PC-9 (cell line): ENCODE measurements at regions of chr7 and their contacts with region 1.

Region 1: DNA sequence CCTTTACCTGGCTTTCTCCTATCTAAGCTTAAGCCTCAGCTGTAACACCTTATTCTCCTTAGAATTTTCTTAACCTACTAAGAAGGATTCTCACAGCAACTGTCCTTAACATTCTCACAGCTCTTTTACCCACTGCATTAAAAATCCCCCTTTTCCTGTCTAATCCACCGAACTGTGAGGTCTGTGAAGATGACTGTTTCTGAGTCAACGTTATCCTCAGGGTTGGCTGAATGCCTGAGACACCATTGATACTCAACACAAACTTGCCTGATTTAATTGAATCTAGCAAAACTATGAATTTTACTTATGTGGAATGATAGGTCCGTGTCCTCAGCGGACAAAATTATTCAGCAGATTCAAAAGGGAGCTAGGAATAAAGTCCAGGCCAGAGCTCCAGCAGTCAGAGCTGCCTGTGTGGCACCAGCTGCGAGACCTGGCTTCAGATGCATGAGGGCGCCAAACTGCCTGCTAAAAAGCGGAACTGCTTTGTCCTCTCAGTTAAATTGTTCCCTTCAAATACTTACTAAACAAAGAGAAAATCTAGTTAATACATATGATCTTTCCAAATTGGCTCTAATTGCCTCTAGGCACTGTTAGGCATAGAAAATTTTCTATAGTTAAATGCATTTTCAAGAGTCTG is 33.4 kb upstream of the VWDE start:
- DNase-seq: no peak
- H3K4me3 ChIP-seq: no peak overlapping the region
- H3K27ac ChIP-seq: no peak overlapping the region
- H3K4me1 ChIP-seq: no peaks in the 10 kb centered on the region
- H3K27me3 ChIP-seq: no peaks in the 10 kb centered on the region
- CTCF ChIP-seq: no peak

Region 2: GRCh38 chr7:12211054-12211710 is 225.8 kb before region 1 on chr7 and contains the start of gene TMEM106B:
- CTCF ChIA-PET with region 1: no interaction called
- POLR2A ChIA-PET with region 1: no interaction called
- intact Hi-C with region 1: no loop called
- DNase-seq: peak; percentile 93 to 98
- H3K4me3 ChIP-seq: peak within 1 kb of the TSS; percentile 74
- H3K27ac ChIP-seq: peak within 1 kb of the TSS; percentile 92
- H3K4me1 ChIP-seq: peaks cover 24% of the 10 kb centered on the region
- H3K27me3 ChIP-seq: no peaks in the 10 kb centered on the region
- CTCF ChIP-seq: peak; percentile 44; the same call in 1 of the 2 replicates
- total RNA-seq, gene TMEM106B: 61.1 and 64.4 TPM in 2 replicates

Region 3: DNA sequence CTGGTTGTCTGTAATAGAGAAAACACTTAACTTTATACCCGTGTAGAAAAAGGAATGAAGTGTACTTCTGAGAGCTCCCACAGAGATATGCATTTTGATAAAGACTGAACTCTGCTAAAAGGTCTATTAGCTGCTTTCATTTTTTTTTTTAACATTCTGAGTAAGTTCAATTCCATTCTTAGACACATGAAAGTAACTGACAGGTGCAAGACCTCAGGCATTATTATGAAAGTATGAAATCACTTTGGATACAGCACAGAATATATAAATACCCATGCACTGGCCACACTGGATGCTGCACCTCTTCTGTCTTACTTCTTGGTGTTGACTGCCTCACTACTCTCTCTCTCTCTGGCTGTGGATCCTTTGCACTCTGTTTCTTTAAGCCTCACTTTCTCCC is 79.5 kb before region 1 on chr7:
- CTCF ChIA-PET with region 1: no interaction called
- POLR2A ChIA-PET with region 1: no interaction called
- intact Hi-C with region 1: no loop called
- DNase-seq: no peak
- H3K4me3 ChIP-seq: no peak overlapping the region
- H3K27ac ChIP-seq: no peak overlapping the region
- H3K4me1 ChIP-seq: no peaks in the 10 kb centered on the region
- H3K27me3 ChIP-seq: no peaks in the 10 kb centered on the region
- CTCF ChIP-seq: no peak

Region 4: DNA sequence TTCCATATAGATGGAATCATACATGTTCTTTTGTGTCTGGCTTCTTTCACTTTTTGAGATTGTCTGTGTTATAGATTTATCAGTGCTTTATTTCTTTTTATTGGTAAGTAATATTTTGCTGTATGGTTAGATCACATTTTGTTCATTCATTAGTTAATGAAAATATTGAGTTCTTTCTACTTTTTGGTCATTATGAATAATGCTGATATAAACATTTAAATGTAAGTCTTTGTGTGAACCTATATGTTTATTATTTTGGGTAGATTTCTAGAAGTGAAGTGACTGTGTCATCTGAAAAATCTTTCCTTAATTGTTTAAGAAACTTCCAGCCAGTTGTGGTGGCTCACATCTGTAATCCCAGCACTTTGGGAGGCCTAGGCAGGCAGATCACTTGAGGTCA is 21.9 kb before region 1 on chr7:
- CTCF ChIA-PET with region 1: no interaction called
- POLR2A ChIA-PET with region 1: interaction called, 10 read pairs
- intact Hi-C with region 1: no loop called
- DNase-seq: no peak
- H3K4me3 ChIP-seq: no peak overlapping the region
- H3K27ac ChIP-seq: no peak overlapping the region
- H3K4me1 ChIP-seq: no peaks in the 10 kb centered on the region
- H3K27me3 ChIP-seq: no peaks in the 10 kb centered on the region
- CTCF ChIP-seq: no peak

Region 5: GRCh38 chr7:12458520-12459131 is 21.6 kb after region 1 on chr7:
- CTCF ChIA-PET with region 1: interaction called, 10 read pairs
- POLR2A ChIA-PET with region 1: no interaction called
- intact Hi-C with region 1: no loop called
- DNase-seq: peak; percentile 17 to 39
- H3K4me3 ChIP-seq: no peak overlapping the region
- H3K27ac ChIP-seq: no peak overlapping the region
- H3K4me1 ChIP-seq: peaks cover 4% of the 10 kb centered on the region; the same call in 1 of the 2 replicates
- H3K27me3 ChIP-seq: no peaks in the 10 kb centered on the region
- CTCF ChIP-seq: peak; percentile 94